ENCODE measurements at regions of chr1 and their contacts with region 1.

Region 1: DNA sequence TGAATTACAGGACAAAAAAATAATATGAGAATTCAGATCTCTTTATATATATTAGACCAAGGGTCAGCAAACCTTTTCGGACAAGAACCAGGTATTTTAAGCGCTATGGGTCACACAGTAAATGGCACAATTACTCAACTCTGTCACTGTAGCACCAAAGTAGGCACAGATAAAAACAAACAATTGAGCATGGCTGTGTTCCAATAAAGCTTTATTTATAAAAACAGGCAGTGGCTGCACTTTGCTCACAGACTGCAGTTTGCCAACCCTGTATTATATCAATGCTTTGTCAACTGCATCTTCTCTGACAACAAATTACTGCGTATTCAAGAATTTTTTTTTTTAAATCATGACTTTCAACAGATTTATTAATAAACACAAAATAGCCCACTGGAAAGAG is 29.8 kb downstream of the EDEM3 start:
- DNase-seq: no peak
- ATAC-seq: no peak
- H3K4me3 ChIP-seq: no peak overlapping the region
- H3K4me3 Mint-ChIP-seq: no peak overlapping the region
- H3K27ac ChIP-seq: no peak overlapping the region
- H3K27ac Mint-ChIP-seq: no peak overlapping the region
- H3K4me1 ChIP-seq: no peaks in the 10 kb centered on the region
- H3K4me1 Mint-ChIP-seq: no peaks in the 10 kb centered on the region
- H3K27me3 ChIP-seq: no peaks in the 10 kb centered on the region
- H3K27me3 Mint-ChIP-seq: no peaks in the 10 kb centered on the region
- CTCF ChIP-seq: no peak

Region 2: DNA sequence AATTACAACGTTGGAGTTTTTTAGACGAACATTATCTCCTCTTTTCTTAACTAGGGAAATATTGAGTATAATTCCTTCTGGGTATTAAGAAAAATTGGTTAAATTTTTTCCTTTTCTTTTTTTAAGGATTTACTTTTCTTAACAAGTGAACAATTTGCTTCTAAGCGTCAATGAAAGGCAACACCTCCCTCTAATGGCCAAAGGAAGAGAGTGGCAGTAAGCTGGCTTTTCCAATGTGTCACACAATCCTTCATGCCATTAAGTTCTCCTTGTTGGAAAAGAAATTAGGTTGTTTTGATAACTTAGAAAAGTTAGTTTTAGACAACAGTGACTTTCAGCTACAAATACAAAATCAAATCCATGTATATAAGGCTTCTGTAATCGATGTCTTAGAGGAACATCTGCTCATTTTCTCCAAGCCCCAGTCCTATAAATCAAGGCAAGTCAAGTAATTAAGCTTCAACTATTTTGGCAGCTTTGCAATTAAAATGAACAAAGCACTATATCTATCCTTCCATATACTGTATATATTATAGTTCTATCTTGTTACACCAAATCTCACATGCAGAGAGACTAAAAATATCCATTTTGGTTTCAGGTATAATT is 33.0 kb before region 1 on chr1:
- intact Hi-C with region 1: no loop called
- DNase-seq: peak in 1 of 2 donors; percentile 25
- ATAC-seq: no peak
- H3K4me3 ChIP-seq: no peak overlapping the region
- H3K4me3 Mint-ChIP-seq: no peak overlapping the region
- H3K27ac ChIP-seq: no peak overlapping the region
- H3K27ac Mint-ChIP-seq: no peak overlapping the region
- H3K4me1 ChIP-seq: no peaks in the 10 kb centered on the region
- H3K4me1 Mint-ChIP-seq: no peaks in the 10 kb centered on the region
- H3K27me3 ChIP-seq: no peaks in the 10 kb centered on the region
- H3K27me3 Mint-ChIP-seq: no peaks in the 10 kb centered on the region
- CTCF ChIP-seq: peak; percentile 34

Region 3: DNA sequence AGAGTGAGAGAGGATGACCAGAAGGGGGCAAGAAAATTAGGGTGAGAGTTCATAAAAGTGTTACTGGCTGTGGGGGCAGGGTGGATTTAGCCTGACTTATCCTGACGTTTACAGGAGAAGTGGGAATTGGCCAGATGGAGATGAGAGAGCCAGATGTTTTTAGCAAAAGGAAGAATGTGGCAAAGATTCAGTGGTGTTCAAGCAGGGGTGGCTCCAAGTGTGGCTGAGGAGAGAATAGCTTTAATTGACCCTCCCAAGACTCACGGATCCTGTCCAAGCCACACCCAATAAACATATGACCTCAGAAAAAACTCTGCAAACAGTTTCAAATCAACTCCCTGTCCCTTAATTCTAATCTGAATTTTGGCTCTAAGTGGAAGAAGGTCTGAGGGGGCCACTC is 65.0 kb after region 1 on chr1:
- intact Hi-C with region 1: loop called (anchors 10 kb)
- DNase-seq: no peak
- ATAC-seq: no peak
- H3K4me3 ChIP-seq: no peak overlapping the region
- H3K4me3 Mint-ChIP-seq: no peak overlapping the region
- H3K27ac ChIP-seq: no peak overlapping the region
- H3K27ac Mint-ChIP-seq: no peak overlapping the region
- H3K4me1 ChIP-seq: no peaks in the 10 kb centered on the region
- H3K4me1 Mint-ChIP-seq: peaks cover 0 to 8% of the 10 kb centered on the region in 2 donors
- H3K27me3 ChIP-seq: no peaks in the 10 kb centered on the region
- H3K27me3 Mint-ChIP-seq: no peaks in the 10 kb centered on the region
- CTCF ChIP-seq: no peak

Region 4: GRCh38 chr1:184903111-184903692 is 178.4 kb after region 1 on chr1:
- intact Hi-C with region 1: no loop called
- DNase-seq: no peak
- ATAC-seq: no peak
- H3K4me3 ChIP-seq: no peak overlapping the region
- H3K4me3 Mint-ChIP-seq: no peak overlapping the region
- H3K27ac ChIP-seq: no peak overlapping the region
- H3K27ac Mint-ChIP-seq: no peak overlapping the region
- H3K4me1 ChIP-seq: peaks cover 8% of the 10 kb centered on the region
- H3K4me1 Mint-ChIP-seq: peaks cover 17 to 24% of the 10 kb centered on the region in 2 donors
- H3K27me3 ChIP-seq: no peaks in the 10 kb centered on the region
- H3K27me3 Mint-ChIP-seq: no peaks in the 10 kb centered on the region
- CTCF ChIP-seq: no peak

Measured in natural killer cell (primary cell).